CD8-positive, alpha-beta T cell (primary cell): ENCODE measurements at regions of chr5 and their contacts with region 1.

Region 1: GRCh38 chr5:169637085-169637548 is at the start of gene DOCK2:
- DNase-seq: peak; percentile 18 to 79 (median 72)
- ATAC-seq: peak; percentile 76
- H3K4me3 ChIP-seq: peak within 1 kb of the TSS; percentile 70 to 92
- H3K4me3 Mint-ChIP-seq: peak within 1 kb of the TSS; percentile 94
- H3K27ac ChIP-seq: peak within 1 kb of the TSS; percentile 76 to 90
- H3K27ac Mint-ChIP-seq: peak within 1 kb of the TSS; percentile 94
- H3K4me1 ChIP-seq: peaks cover 36% of the 10 kb centered on the region
- H3K4me1 Mint-ChIP-seq: peaks cover 50% of the 10 kb centered on the region
- H3K27me3 ChIP-seq: no peaks in the 10 kb centered on the region
- H3K27me3 Mint-ChIP-seq: no peaks in the 10 kb centered on the region
- CTCF ChIP-seq: no peak
- total RNA-seq, gene DOCK2: 194 to 197 TPM

Region 2: DNA sequence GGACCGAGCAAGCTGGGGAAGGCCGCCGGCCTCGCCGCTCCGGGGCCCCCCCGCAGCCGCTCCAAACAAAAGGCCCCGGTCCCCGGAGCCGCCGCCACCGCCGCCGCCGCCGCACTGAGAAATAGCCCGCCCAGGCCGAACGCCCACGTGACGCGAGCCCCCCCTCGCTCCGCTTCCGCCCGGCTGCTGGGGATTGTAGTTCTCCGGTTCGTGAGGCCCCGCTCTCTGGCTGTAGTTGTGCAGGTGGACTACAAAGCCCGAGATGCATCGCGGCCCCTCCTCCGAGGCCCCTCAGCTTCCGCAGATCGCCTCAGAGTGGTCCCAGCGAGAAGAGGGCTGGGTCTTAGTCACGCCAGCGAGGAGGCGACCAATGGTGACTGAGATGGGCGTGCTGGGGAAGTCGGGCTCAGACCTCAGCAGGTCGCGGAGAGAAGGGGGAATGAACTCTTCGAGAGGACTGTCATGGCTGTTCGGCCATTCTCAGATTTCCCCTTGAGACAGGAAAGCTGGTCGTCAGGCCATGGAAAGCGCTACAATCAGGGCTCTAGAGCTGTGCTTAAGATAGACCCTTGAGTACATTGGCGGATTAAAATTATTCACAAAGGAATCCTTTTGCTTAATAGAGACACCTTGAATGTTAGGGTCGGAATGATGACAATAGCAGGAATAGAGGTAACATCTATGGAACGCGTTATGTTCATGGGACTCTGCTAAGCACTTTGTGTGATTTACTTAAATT is 1057.5 kb before region 1 on chr5:
- CTCF ChIA-PET with region 1: no interaction called
- POLR2A ChIA-PET with region 1: no interaction called
- intact Hi-C with region 1: loop called in 1 of 2 experiments (anchors 1 kb)
- DNase-seq: peak; percentile 94 to 99 (median 97)
- ATAC-seq: peak; percentile 97
- H3K4me3 ChIP-seq: peak overlapping the region; percentile 60 to 74
- H3K4me3 Mint-ChIP-seq: peak overlapping the region; percentile 89
- H3K27ac ChIP-seq: peak overlapping the region; percentile 45 to 96
- H3K27ac Mint-ChIP-seq: peak overlapping the region; percentile 96
- H3K4me1 ChIP-seq: peaks cover 26% of the 10 kb centered on the region
- H3K4me1 Mint-ChIP-seq: peaks cover 41% of the 10 kb centered on the region
- H3K27me3 ChIP-seq: no peaks in the 10 kb centered on the region
- H3K27me3 Mint-ChIP-seq: peaks cover 2% of the 10 kb centered on the region
- CTCF ChIP-seq: no peak

Region 3: DNA sequence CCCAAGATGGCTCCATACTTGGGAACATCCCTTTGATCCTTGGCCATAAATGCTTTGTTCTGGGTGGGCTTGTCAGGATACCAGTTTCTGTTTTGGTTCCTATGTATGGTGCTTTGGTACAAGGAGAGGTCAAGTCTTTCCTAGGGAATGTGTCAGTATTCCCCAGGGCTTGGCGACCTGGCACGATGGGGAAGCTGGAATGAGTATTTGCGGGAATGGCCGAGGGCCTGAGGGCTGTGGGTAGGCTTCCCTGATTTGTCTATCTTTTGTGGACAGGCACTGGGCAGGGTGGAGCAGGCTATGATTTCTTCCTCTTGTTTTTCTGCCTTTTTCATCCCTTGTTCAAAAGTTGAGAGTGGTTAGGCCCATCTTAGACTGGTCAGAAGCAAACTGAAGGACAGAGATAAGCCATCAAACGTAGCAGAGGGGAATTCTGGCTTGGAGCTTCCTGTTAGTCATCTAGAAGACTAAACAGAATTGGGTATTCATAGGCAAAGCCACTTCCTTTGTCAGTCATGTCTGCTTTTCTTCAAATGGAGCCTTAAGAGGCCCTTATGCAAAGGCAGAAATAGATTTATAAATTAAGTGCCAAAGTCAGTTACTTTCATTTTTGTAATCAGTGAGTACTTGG is 13.7 kb after region 1 on chr5:
- CTCF ChIA-PET with region 1: interaction called, 5 read pairs
- POLR2A ChIA-PET with region 1: interaction called, 14 read pairs
- intact Hi-C with region 1: loop called in 1 of 2 experiments (anchors 2 kb)
- DNase-seq: peak in 2 of 9 experiments; percentile 50 to 73
- ATAC-seq: peak; percentile 64
- H3K4me3 ChIP-seq: no peak overlapping the region
- H3K4me3 Mint-ChIP-seq: peak overlapping the region; percentile 66
- H3K27ac ChIP-seq: peak overlapping the region in 1 of 2 experiments; percentile 72
- H3K27ac Mint-ChIP-seq: peak overlapping the region; percentile 92
- H3K4me1 ChIP-seq: peaks cover 84% of the 10 kb centered on the region
- H3K4me1 Mint-ChIP-seq: peaks cover 99% of the 10 kb centered on the region
- H3K27me3 ChIP-seq: no peaks in the 10 kb centered on the region
- H3K27me3 Mint-ChIP-seq: no peaks in the 10 kb centered on the region
- CTCF ChIP-seq: no peak

Region 4: DNA sequence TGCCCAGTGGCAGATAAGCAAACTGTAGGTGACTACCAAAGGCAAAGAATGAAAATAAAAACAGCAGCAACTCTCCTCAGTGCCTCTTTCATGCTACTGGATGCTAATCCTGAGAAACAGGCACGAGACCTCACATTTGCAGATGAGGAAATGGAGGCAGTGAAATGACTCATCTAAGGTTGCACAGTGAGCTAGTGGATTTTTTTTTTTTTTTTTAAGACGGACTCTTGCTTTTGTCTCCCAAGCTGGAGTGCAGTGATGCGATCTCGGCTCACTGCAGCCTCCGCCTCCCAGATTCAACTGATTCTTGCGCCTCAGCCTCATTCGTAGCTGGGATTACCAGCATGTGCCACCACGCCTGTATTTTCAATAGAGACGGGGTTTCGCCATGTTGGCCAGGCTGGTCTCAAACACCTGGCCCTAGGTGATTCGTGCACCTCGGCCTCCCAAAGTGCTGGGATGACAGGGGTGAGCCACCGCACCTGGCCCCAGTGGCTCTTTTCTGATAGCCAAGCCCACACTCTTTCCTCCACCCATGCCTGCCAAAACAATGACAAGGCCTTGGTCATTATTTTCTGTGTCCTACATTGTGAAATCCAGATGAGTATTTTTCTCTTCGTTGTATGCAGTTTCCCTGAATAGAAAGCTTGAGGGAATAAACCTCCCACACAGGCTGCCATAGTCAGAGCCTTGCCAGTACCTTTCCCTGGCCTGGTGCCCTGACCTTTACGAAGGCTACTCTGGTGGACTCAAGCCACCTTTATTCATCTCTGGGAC is 19.2 kb after region 1 on chr5:
- CTCF ChIA-PET with region 1: interaction called, 4 read pairs
- POLR2A ChIA-PET with region 1: interaction called, 14 read pairs
- intact Hi-C with region 1: loop called in 1 of 2 experiments (anchors 2 kb)
- DNase-seq: peak in 2 of 9 experiments; percentile 26 to 58
- ATAC-seq: peak; percentile 41
- H3K4me3 ChIP-seq: no peak overlapping the region
- H3K4me3 Mint-ChIP-seq: peak overlapping the region; percentile 15
- H3K27ac ChIP-seq: peak overlapping the region in 1 of 2 experiments; percentile 4
- H3K27ac Mint-ChIP-seq: peak overlapping the region; percentile 60
- H3K4me1 ChIP-seq: peaks cover 49% of the 10 kb centered on the region
- H3K4me1 Mint-ChIP-seq: peaks cover 82% of the 10 kb centered on the region
- H3K27me3 ChIP-seq: no peaks in the 10 kb centered on the region
- H3K27me3 Mint-ChIP-seq: no peaks in the 10 kb centered on the region
- CTCF ChIP-seq: no peak